Esophagus squamous epithelium (tissue), 5 donors: ENCODE measurements at regions of chr11 and their contacts with region 1.

Region 1: DNA sequence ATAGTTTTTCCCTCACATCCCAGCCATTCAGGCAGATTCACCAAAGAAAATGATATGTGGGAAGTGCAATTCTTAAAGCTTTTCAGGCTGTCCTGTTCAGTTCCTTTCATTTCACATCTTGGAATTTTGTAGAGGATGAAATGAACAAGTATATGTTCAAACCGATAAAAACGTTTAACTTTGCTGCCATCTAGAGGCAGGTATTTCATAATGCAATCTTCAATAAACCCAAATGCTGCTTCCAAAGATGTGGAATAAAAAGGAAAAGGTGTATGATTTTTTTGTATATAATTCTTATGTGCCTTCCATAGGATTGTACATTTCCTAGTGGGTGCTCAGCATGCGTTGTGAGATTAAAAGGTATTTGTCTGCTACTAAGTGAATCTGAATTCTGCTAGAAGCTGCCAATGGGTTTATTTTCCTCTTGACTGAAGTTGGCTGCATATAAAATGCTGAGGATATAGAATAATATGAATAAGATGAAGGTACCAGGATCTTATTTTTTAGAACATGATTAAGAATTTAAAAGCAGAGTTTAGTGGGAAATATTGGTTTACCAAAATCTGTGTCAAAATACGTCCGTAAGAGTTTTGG is 199.3 kb downstream of the PGR start:
- DNase-seq: no peak
- H3K4me3 ChIP-seq: no peak overlapping the region
- H3K27ac ChIP-seq: no peak overlapping the region
- H3K4me1 ChIP-seq: no peaks in the 10 kb centered on the region
- H3K27me3 ChIP-seq: no peaks in the 10 kb centered on the region
- CTCF ChIP-seq: peak; percentile 41 to 67 (median 56)
- POLR2A ChIP-seq: no peak

Region 2: GRCh38 chr11:100575870-100576705 is 354.2 kb before region 1 on chr11:
- intact Hi-C with region 1: loop called (anchors 5 kb)
- DNase-seq: no peak
- H3K4me3 ChIP-seq: no peak overlapping the region
- H3K27ac ChIP-seq: no peak overlapping the region
- H3K4me1 ChIP-seq: peaks cover 0 to 21% (median 0%) of the 10 kb centered on the region in 3 donors
- H3K27me3 ChIP-seq: no peaks in the 10 kb centered on the region
- CTCF ChIP-seq: peak; percentile 57 to 79 (median 68)
- POLR2A ChIP-seq: no peak

Region 3: DNA sequence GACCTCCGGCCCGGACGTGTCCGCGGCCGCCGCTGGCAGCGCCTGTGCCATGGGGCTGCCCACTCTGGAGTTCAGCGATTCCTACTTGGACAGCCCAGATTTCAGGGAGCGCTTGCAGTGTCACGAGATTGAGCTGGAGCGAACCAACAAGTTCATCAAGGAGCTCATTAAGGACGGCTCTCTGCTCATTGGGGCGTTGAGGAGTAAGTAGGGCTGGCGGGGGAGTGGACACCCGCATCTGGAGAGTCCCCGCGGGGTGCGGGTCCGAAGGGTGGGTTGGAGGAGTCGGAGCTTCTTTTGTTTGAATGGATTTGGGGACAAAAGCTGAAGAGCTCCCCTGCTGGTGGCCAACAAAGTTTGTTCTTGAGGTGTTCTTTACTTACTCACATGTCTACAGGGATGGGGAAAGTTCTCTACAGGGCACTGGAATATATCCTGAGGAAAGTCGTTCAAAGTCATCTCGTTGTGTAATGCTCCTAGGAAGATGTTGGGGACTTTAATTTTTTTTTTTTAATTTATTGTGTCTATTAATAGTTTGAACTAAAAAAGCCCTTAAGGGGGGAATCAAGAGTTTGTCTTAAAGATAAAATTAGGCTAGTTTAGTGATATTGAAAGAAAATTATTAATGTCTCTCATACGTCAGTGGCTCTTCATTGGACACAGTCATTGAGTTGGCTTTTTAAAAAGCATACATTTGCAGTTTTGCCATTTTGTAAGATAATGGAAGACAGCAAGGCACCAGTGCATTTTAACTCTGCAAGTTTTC is 242.5 kb before region 1 on chr11:
- intact Hi-C with region 1: loop called (anchors 10 kb)
- DNase-seq: no peak
- H3K4me3 ChIP-seq: peak overlapping the region; percentile 53 to 85 (median 78)
- H3K27ac ChIP-seq: peak overlapping the region; percentile 81 to 88 (median 86)
- H3K4me1 ChIP-seq: peaks cover 0 to 71% (median 13%) of the 10 kb centered on the region in 3 donors
- H3K27me3 ChIP-seq: no peaks in the 10 kb centered on the region
- CTCF ChIP-seq: peak in 5 of 6 experiments; percentile 33 to 73 (median 60)
- POLR2A ChIP-seq: no peak